Heart right ventricle (tissue), 16 donors: ENCODE measurements at regions of chr4 and their contacts with region 1.

Region 1: DNA sequence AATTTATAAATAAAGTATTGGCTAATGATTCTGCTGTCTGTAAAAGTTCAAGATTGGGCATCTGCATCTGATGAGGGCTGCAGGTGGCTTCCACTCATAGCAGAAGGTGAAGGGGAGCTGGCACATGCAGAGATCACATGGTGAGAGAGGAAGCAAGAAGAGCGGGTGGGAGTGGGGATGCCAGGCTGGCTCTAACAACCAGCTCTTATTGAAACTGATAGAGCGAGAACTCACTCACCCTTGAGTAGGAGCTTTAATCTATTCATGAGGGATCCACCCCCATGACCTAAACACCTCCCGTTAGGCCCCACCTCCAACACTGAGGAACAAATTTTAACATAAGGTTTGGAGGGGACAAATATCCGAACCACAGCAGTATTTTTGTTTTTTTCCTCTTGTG is 45.8 kb downstream of the PHOX2B start:
- DNase-seq: no peak
- ATAC-seq: no peak
- H3K4me3 ChIP-seq: no peak overlapping the region
- H3K27ac ChIP-seq: no peak overlapping the region
- H3K4me1 ChIP-seq: no peaks in the 10 kb centered on the region
- H3K27me3 ChIP-seq: no peaks in the 10 kb centered on the region
- CTCF ChIP-seq: no peak

Region 2: GRCh38 chr4:41744572-41745291 is 42.0 kb after region 1 on chr4:
- intact Hi-C with region 1: loop called in 1 of 10 experiments (anchors 1 kb)
- DNase-seq: no peak
- ATAC-seq: no peak
- H3K4me3 ChIP-seq: no peak overlapping the region
- H3K27ac ChIP-seq: no peak overlapping the region
- H3K4me1 ChIP-seq: peaks cover 0 to 16% (median 7%) of the 10 kb centered on the region in 9 donors
- H3K27me3 ChIP-seq: peaks cover 24 to 98% (median 96%) of the 10 kb centered on the region in 7 donors
- CTCF ChIP-seq: no peak